ENCODE measurements at regions of chr11 and their contacts with region 1.

Region 1: GRCh38 chr11:67439321-67439883 is 1.9 kb upstream of the PTPRCAP start:
- DNase-seq: no peak
- ATAC-seq: no peak
- H3K4me3 ChIP-seq: no peak overlapping the region
- H3K27ac ChIP-seq: 0 out of 3 replicates have a peak overlapping the region, but pooled peaks have one; percentile 28
- H3K4me1 ChIP-seq: peaks cover 16 to 91% of the 10 kb centered on the region in 2 experiments
- H3K27me3 ChIP-seq: no peaks in the 10 kb centered on the region
- CTCF ChIP-seq: peak in 2 of 3 experiments; percentile 39 to 43; a peak in 3 of 6 replicates
- EP300 ChIP-seq: no peak
- POLR2A ChIP-seq: peak; percentile 15; the same call in 1 of the 2 replicates
- RAD21 ChIP-seq: peak in 1 of 2 experiments; percentile 31; a peak in 1 of 4 replicates

Region 2: GRCh38 chr11:67428052-67428914 is 11.1 kb before region 1 on chr11 and contains the start of gene RPS6KB2:
- CTCF ChIA-PET with region 1: no interaction called
- POLR2A ChIA-PET with region 1: interaction called, 21 read pairs
- in situ Hi-C with region 1: no loop called
- intact Hi-C with region 1: no loop called
- DNase-seq: peak; percentile 96 to 99 (median 98)
- ATAC-seq: peak; percentile 92
- H3K4me3 ChIP-seq: peak within 1 kb of the TSS; percentile 83
- H3K27ac ChIP-seq: peak within 1 kb of the TSS; percentile 78
- H3K4me1 ChIP-seq: peaks cover 9 to 43% of the 10 kb centered on the region in 2 experiments; a peak in 4 of 5 replicates
- H3K27me3 ChIP-seq: no peaks in the 10 kb centered on the region
- CTCF ChIP-seq: no peak
- EP300 ChIP-seq: no peak
- POLR2A ChIP-seq: peak; percentile 89
- RAD21 ChIP-seq: no peak
- polyA plus RNA-seq, gene RPS6KB2: 0.42 to 3.1 TPM

Region 3: GRCh38 chr11:68287419-68287818 is 848.0 kb after region 1 on chr11:
- CTCF ChIA-PET with region 1: no interaction called
- POLR2A ChIA-PET with region 1: no interaction called
- in situ Hi-C with region 1: no loop called
- intact Hi-C with region 1: no loop called
- DNase-seq: peak in 1 of 4 experiments; percentile 7
- ATAC-seq: no peak; the same call in 2 of the 3 replicates
- H3K4me3 ChIP-seq: no peak overlapping the region
- H3K27ac ChIP-seq: no peak overlapping the region
- H3K4me1 ChIP-seq: peaks cover 5 to 6% of the 10 kb centered on the region in 2 experiments; a peak in 3 of 5 replicates
- H3K27me3 ChIP-seq: no peaks in the 10 kb centered on the region
- CTCF ChIP-seq: no peak
- EP300 ChIP-seq: no peak
- POLR2A ChIP-seq: no peak
- RAD21 ChIP-seq: no peak